ENCODE measurements at regions of chr18 and their contacts with region 1.

Region 1: DNA sequence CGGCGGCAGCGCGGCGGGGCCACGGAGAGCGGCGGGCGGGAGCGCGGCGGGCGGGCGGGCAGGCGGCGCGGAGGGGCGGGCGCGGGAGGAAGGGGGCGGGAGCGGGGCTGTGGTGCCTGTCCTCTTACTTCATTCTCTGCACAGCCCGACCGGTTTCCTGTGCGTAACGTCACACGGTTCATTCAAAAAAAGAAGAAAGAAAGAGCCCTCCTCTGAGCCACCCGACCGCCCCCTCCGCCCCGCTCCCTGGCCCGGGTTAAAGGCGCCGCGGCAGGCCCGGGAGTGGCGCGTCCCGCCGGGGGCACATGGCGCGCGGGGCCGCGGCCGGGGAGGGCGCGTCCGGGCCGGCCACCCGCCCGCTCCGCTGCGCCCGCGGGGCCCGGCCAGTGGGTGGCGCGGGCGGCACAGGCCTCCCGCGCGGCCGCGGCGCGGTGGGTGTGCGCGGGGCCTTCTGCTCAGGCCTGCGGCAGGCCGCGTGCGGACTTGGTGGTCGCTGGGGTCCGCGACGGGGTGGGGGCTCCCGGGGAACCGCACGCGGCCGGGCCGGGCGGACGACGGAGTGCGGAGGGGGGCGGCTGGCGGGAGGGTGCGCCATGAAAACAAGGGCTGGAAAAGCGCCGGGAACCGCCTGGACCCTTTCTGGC is 599 bp upstream of the BCL2 start:
- DNase-seq: peak; percentile 79 to 84 (median 81)
- H3K4me3 ChIP-seq: peak overlapping the region; percentile 73
- H3K27ac ChIP-seq: peak overlapping the region; percentile 79 to 86
- H3K4me1 ChIP-seq: peaks cover 3% of the 10 kb centered on the region
- H3K27me3 ChIP-seq: no peaks in the 10 kb centered on the region
- CTCF ChIP-seq: peak in 2 of 3 donors; percentile 7 to 35
- EP300 ChIP-seq: no peak
- POLR2A ChIP-seq: no peak

Region 2: GRCh38 chr18:63025251-63026090 is 294.7 kb before region 1 on chr18:
- intact Hi-C with region 1: loop called in 1 of 4 experiments (anchors 5 kb)
- DNase-seq: peak in 1 of 5 donors; percentile 26
- H3K4me3 ChIP-seq: no peak overlapping the region
- H3K27ac ChIP-seq: no peak overlapping the region
- H3K4me1 ChIP-seq: no peaks in the 10 kb centered on the region
- H3K27me3 ChIP-seq: no peaks in the 10 kb centered on the region
- CTCF ChIP-seq: no peak
- EP300 ChIP-seq: no peak
- POLR2A ChIP-seq: no peak

Region 3: GRCh38 chr18:63155169-63155852 is 164.9 kb before region 1 on chr18:
- intact Hi-C with region 1: loop called in 1 of 4 experiments (anchors 10 kb)
- DNase-seq: no peak
- H3K4me3 ChIP-seq: no peak overlapping the region
- H3K27ac ChIP-seq: no peak overlapping the region
- H3K4me1 ChIP-seq: peaks cover 21% of the 10 kb centered on the region
- H3K27me3 ChIP-seq: no peaks in the 10 kb centered on the region
- CTCF ChIP-seq: peak in 1 of 3 donors; percentile 17
- EP300 ChIP-seq: no peak
- POLR2A ChIP-seq: no peak

Region 4: GRCh38 chr18:63267975-63268721 is 52.0 kb before region 1 on chr18:
- intact Hi-C with region 1: loop called in 2 of 4 experiments (anchors 10 kb)
- DNase-seq: no peak
- H3K4me3 ChIP-seq: no peak overlapping the region
- H3K27ac ChIP-seq: no peak overlapping the region
- H3K4me1 ChIP-seq: peaks cover 11% of the 10 kb centered on the region
- H3K27me3 ChIP-seq: no peaks in the 10 kb centered on the region
- CTCF ChIP-seq: no peak
- EP300 ChIP-seq: no peak
- POLR2A ChIP-seq: no peak

Measured in ovary (tissue), 10 donors.